Panc1 (cell line): ENCODE measurements at regions of chr5 and their contacts with region 1.

Region 1: GRCh38 chr5:145936401-145937131 is at the start of gene SH3RF2:
- DNase-seq: no peak
- ATAC-seq: peak; percentile 85
- H3K4me3 ChIP-seq: peak within 1 kb of the TSS; percentile 46 to 76
- H3K27ac ChIP-seq: peak within 1 kb of the TSS; percentile 100
- H3K4me1 ChIP-seq: peaks cover 67% of the 10 kb centered on the region
- H3K27me3 ChIP-seq: no peaks in the 10 kb centered on the region
- CTCF ChIP-seq: no peak
- total RNA-seq, gene SH3RF2: 23.1 TPM

Region 2: GRCh38 chr5:145854651-145855258 is 81.8 kb before region 1 on chr5:
- CTCF ChIA-PET with region 1: no interaction called
- POLR2A ChIA-PET with region 1: no interaction called
- in situ Hi-C with region 1: loop called (anchors 5 kb)
- intact Hi-C with region 1: no loop called
- DNase-seq: peak; percentile 48
- ATAC-seq: peak; percentile 92
- H3K4me3 ChIP-seq: peak overlapping the region in 1 of 2 experiments; percentile 4; a peak in 1 of 4 replicates
- H3K27ac ChIP-seq: peak overlapping the region; percentile 88
- H3K4me1 ChIP-seq: peaks cover 38% of the 10 kb centered on the region
- H3K27me3 ChIP-seq: no peaks in the 10 kb centered on the region
- CTCF ChIP-seq: no peak